Endothelial cell of umbilical vein (primary cell): ENCODE measurements at regions of chr15 and their contacts with region 1.

Region 1: GRCh38 chr15:81106560-81106959 is 27.5 kb upstream of the CFAP161 start:
- DNase-seq: peak; percentile 78
- H3K4me3 ChIP-seq: no peak overlapping the region
- H3K27ac ChIP-seq: no peak overlapping the region
- H3K4me1 ChIP-seq: peaks cover 7% of the 10 kb centered on the region
- H3K27me3 ChIP-seq: peaks cover 0 to 2% of the 10 kb centered on the region in 2 experiments
- CTCF ChIP-seq: peak; percentile 66 to 73
- POLR2A ChIP-seq: no peak

Region 2: GRCh38 chr15:80455668-80456442 is 650.7 kb before region 1 on chr15:
- CTCF ChIA-PET with region 1: interaction called, 6 read pairs
- POLR2A ChIA-PET with region 1: no interaction called
- dilution Hi-C with region 1: no loop called
- intact Hi-C with region 1: loop called (anchors 1 kb)
- DNase-seq: peak; percentile 63
- H3K4me3 ChIP-seq: no peak overlapping the region
- H3K27ac ChIP-seq: no peak overlapping the region
- H3K4me1 ChIP-seq: no peaks in the 10 kb centered on the region
- H3K27me3 ChIP-seq: peaks cover 1 to 3% of the 10 kb centered on the region in 2 experiments
- CTCF ChIP-seq: peak; percentile 85 to 94
- POLR2A ChIP-seq: no peak

Region 3: GRCh38 chr15:80989518-80990478 is 116.8 kb before region 1 on chr15 and contains the start of gene MESD:
- CTCF ChIA-PET with region 1: interaction called, 14 read pairs
- POLR2A ChIA-PET with region 1: no interaction called
- dilution Hi-C with region 1: no loop called
- intact Hi-C with region 1: no loop called
- DNase-seq: peak; percentile 96
- H3K4me3 ChIP-seq: peak within 1 kb of the TSS; percentile 61 to 86 (median 77)
- H3K27ac ChIP-seq: peak within 1 kb of the TSS; percentile 75
- H3K4me1 ChIP-seq: peaks cover 18% of the 10 kb centered on the region
- H3K27me3 ChIP-seq: no peaks in the 10 kb centered on the region
- CTCF ChIP-seq: no peak
- POLR2A ChIP-seq: peak; percentile 95
- total RNA-seq, gene MESD: 30.5 and 32.9 TPM in 2 replicates

Region 4: DNA sequence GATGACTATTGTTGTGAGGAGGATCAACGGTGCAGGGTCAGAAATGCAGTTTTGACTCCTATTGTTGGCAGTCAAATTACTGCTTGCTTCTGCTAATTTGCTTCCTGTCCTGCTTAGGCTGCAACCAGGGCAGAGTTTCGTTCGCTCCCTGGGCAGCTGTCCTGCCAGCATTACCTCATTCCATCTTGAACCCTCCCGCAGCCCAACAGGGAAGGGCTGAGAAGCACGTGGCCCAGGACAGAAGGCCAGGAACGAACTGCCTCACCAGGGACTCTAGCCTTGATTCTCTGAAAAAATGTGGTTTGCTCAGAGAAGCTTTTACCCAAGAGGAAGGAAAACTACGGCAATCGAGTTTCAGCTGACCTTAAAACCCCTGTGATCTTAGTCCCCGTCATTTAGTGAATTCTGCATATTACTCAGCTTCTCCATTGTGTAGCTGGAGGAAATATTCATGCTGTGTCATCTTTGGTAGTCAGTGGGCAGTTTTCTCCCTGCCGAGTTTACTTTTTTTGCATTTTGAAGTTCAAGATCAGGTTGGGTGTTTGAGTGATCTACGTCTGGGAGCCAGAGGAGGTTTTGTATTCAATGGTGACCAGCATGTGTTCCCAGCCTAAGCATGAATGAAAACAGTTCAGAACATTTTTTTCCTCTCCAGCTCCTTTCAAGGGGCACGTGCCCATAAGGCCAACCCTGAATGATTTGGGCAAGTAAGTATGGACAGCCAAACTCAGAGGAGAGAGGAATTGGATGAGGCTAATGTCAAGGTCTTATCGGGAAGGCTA is 82.9 kb before region 1 on chr15:
- CTCF ChIA-PET with region 1: interaction called, 11 read pairs
- POLR2A ChIA-PET with region 1: no interaction called
- dilution Hi-C with region 1: no loop called
- intact Hi-C with region 1: no loop called
- DNase-seq: peak; percentile 91
- H3K4me3 ChIP-seq: no peak overlapping the region
- H3K27ac ChIP-seq: peak overlapping the region; percentile 97
- H3K4me1 ChIP-seq: peaks cover 23% of the 10 kb centered on the region
- H3K27me3 ChIP-seq: no peaks in the 10 kb centered on the region
- CTCF ChIP-seq: no peak
- POLR2A ChIP-seq: no peak

Region 5: GRCh38 chr15:81091889-81092558 is 14.5 kb before region 1 on chr15:
- CTCF ChIA-PET with region 1: interaction called, 32 read pairs
- POLR2A ChIA-PET with region 1: no interaction called
- dilution Hi-C with region 1: no loop called
- intact Hi-C with region 1: loop called (anchors 1 kb)
- DNase-seq: peak; percentile 95
- H3K4me3 ChIP-seq: peak overlapping the region in 1 of 3 experiments; percentile 16
- H3K27ac ChIP-seq: peak overlapping the region; percentile 51
- H3K4me1 ChIP-seq: peaks cover 14% of the 10 kb centered on the region
- H3K27me3 ChIP-seq: no peaks in the 10 kb centered on the region
- CTCF ChIP-seq: no peak
- POLR2A ChIP-seq: no peak

Region 6: DNA sequence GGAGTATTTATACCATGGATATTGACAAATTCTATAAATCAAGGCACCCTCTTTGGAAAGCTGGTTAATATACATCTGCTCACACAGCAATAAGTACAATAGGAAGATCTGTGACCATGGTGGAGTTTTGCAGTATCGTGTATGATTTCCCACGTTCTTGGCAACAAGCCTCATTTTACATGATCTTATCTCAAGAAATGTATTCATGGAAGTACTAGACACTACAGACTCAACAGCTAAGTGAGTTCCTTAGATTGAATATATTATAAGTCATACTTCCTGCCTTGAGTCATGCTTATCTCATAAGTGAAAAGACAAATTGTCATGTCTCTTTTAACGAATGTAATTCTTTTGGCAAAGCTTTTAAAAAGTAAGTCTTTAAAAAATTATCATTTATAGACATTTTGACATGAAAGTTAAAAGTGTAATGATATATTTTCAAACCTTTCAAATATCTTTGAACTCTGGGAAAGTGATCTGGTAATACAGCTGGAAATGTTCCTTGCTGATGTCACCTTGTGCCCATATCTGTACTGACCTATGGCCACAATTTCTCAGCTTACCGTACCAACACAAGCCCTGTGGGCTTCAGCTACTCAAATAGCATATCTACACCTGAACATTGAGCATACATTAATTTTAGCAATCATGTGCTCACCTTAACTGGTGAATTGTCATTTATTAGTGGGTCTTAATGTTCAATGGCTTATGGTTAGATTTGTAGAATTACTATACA is 397.8 kb after region 1 on chr15:
- CTCF ChIA-PET with region 1: no interaction called
- POLR2A ChIA-PET with region 1: no interaction called
- dilution Hi-C with region 1: no loop called
- intact Hi-C with region 1: no loop called
- DNase-seq: peak; percentile 96
- H3K4me3 ChIP-seq: no peak overlapping the region
- H3K27ac ChIP-seq: peak overlapping the region; percentile 82
- H3K4me1 ChIP-seq: peaks cover 19% of the 10 kb centered on the region
- H3K27me3 ChIP-seq: no peaks in the 10 kb centered on the region
- CTCF ChIP-seq: no peak
- POLR2A ChIP-seq: no peak